PC-9 (cell line): ENCODE measurements at regions of chr1 and their contacts with region 1.

Region 1: GRCh38 chr1:21022279-21023040 is 154.2 kb downstream of the EIF4G3 start:
- DNase-seq: peak; percentile 56 to 95
- H3K4me3 ChIP-seq: peak overlapping the region; percentile 41; the same call in 1 of the 2 replicates
- H3K27ac ChIP-seq: peak overlapping the region; percentile 99
- H3K4me1 ChIP-seq: peaks cover 19% of the 10 kb centered on the region
- H3K27me3 ChIP-seq: no peaks in the 10 kb centered on the region
- CTCF ChIP-seq: no peak

Region 2: GRCh38 chr1:20830378-20830777 is 192.1 kb before region 1 on chr1:
- CTCF ChIA-PET with region 1: no interaction called
- POLR2A ChIA-PET with region 1: no interaction called
- intact Hi-C with region 1: no loop called
- DNase-seq: no peak
- H3K4me3 ChIP-seq: no peak overlapping the region
- H3K27ac ChIP-seq: no peak overlapping the region
- H3K4me1 ChIP-seq: no peaks in the 10 kb centered on the region
- H3K27me3 ChIP-seq: no peaks in the 10 kb centered on the region
- CTCF ChIP-seq: no peak

Region 3: DNA sequence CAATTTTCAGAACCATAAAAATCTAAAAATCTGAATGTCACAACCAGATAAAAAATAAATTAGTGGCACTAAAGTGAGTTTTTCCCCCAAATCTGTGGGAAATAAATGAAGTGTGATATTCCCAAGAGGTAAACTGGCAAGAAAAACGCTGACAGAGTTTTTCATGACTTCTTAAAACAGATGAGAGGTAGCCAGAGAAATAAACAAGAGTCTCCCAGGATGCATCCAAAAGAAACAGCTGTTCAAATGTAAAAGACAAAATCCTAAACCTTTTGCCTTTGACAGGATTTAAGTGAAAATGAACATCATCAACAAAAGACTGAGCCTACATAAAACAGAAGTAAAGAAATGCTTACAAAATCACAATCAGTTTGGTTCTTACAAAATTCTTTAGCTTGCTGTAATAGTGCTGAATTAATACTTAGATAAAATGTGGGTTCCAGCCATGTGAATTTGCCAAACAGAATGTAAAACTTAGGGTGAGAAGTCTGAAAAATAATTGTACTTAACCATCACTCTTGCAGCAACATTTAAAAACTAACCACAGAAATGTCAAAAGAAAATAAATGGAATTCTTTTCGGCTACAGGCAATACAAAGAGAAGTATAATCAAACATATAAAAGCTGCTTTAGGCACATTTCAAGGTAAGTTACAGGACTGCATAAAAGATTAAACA is 20.6 kb after region 1 on chr1:
- CTCF ChIA-PET with region 1: no interaction called
- POLR2A ChIA-PET with region 1: interaction called, 10 read pairs
- intact Hi-C with region 1: no loop called
- DNase-seq: no peak
- H3K4me3 ChIP-seq: no peak overlapping the region
- H3K27ac ChIP-seq: no peak overlapping the region
- H3K4me1 ChIP-seq: no peaks in the 10 kb centered on the region
- H3K27me3 ChIP-seq: no peaks in the 10 kb centered on the region
- CTCF ChIP-seq: no peak